Breast epithelium (tissue), 4 donors: ENCODE measurements at regions of chr7 and their contacts with region 1.

Region 1: GRCh38 chr7:158228986-158229385 is 358.6 kb downstream of the PTPRN2 start:
- DNase-seq: no peak
- H3K4me3 ChIP-seq: no peak overlapping the region
- H3K27ac ChIP-seq: no peak overlapping the region
- H3K4me1 ChIP-seq: no peaks in the 10 kb centered on the region
- H3K27me3 ChIP-seq: peaks cover 0 to 4% of the 10 kb centered on the region in 2 donors
- CTCF ChIP-seq: no peak
- POLR2A ChIP-seq: no peak

Region 2: DNA sequence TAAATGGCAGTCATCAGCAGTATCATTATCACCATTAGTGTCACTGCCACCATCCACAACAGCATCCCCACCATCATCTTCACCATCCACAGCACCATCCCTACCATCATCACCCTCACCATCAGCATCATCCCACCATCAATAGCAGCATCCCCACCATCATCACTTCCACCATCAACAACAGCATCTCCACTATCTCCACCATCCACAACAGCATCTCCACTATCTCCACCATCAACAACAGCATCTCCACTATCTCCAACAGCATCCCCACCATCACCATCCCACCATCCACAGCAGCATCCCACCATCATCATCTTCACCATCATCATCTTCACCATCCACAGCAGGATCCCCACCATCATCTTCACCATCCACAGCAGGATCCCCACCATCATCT is 56.6 kb before region 1 on chr7:
- intact Hi-C with region 1: loop called (anchors 2 kb)
- DNase-seq: no peak
- H3K4me3 ChIP-seq: no peak overlapping the region
- H3K27ac ChIP-seq: no peak overlapping the region
- H3K4me1 ChIP-seq: no peaks in the 10 kb centered on the region
- H3K27me3 ChIP-seq: no peaks in the 10 kb centered on the region
- CTCF ChIP-seq: no peak
- POLR2A ChIP-seq: no peak

Region 3: GRCh38 chr7:158186864-158187693 is 41.9 kb before region 1 on chr7:
- intact Hi-C with region 1: loop called (anchors 1 kb)
- DNase-seq: no peak
- H3K4me3 ChIP-seq: no peak overlapping the region
- H3K27ac ChIP-seq: no peak overlapping the region
- H3K4me1 ChIP-seq: no peaks in the 10 kb centered on the region
- H3K27me3 ChIP-seq: no peaks in the 10 kb centered on the region
- CTCF ChIP-seq: no peak
- POLR2A ChIP-seq: no peak